ENCODE measurements at regions of chr7 and their contacts with region 1.

Region 1: DNA sequence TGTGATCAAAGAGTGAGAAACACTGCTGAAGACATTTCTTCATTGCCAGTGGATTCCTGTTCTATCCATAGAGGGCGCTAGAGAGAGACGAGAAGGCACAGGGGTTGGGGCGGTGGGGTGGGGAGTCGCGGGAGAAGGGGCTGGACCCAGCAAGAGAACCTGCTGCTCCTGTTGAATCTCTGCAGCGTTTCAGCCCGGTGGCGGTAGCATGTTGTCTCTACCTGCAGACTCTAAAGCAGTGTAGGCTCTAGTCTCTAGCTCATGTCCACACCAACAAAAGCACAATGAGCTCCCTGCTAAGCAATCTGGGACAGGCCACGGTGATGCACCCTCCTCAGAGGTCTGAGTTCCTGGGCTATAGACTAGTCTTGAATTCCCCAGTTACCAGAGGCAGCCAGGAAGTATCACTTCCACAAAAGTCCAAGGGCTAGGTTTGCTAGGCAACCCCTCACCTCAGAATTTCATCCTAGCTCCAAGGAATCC is 167.7 kb downstream of the DGKB start:
- ATAC-seq: peak in 3 of 8 experiments; percentile 22 to 43 (median 41)
- H3K4me3 ChIP-seq: no peak overlapping the region
- H3K27ac ChIP-seq: no peak overlapping the region
- H3K4me1 ChIP-seq: no peaks in the 10 kb centered on the region

Region 2: DNA sequence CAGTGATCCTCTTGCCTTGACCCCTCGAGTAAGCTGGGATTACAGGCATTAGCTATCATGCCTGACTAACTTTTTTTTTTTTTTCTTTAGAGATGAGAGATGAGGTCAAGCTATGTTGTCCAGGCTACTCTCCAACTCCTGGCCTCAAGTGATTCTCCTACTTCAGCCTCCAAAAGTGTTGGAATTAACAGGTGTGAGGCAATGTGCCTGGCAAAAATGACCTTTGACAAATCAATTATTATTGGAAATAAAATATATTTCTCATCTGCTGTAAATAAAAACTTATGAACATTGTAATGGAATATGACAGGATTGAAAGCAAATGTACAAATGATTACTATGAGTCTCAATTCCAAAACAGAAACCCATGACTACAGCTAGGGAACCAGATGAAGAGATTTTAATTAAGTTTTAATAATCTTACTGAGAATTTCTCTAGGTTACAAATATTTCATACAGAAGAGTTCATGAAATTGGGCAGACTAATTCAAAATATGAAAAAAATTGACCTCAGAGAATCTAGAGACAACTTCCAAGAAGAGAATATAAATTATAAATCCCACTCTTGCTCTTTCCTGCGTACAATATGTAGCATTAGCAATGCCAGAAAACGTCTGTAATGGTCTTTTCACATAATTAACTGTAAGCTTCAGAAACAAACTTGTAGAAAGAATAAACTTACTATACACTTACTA is 247.0 kb before region 1 on chr7:
- in situ Hi-C with region 1: no loop called
- ATAC-seq: no peak
- H3K4me3 ChIP-seq: no peak overlapping the region
- H3K27ac ChIP-seq: no peak overlapping the region
- H3K4me1 ChIP-seq: no peaks in the 10 kb centered on the region

Region 3: DNA sequence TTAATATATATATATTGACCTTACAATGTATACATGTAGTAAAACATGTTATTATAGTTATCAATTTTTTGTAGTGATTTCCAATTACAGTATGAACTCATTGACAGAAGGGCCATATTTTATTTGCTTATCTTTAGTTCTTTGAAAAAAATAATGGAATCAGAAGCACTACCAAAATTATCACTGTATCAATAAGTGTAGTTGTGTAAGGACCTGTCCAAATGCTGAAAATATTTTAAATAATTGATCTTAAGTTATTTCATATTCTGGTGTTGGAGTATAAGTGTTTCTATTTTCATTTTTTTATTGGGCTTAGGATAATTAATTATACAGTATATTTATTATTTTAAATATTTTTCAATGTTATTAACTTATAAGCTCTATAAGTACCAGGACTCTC is 176.2 kb after region 1 on chr7:
- in situ Hi-C with region 1: loop called in 1 of 9 experiments (anchors 10 kb)
- ATAC-seq: no peak
- H3K4me3 ChIP-seq: no peak overlapping the region
- H3K27ac ChIP-seq: no peak overlapping the region
- H3K4me1 ChIP-seq: peaks cover 0 to 5% of the 10 kb centered on the region in 2 donors

Region 4: DNA sequence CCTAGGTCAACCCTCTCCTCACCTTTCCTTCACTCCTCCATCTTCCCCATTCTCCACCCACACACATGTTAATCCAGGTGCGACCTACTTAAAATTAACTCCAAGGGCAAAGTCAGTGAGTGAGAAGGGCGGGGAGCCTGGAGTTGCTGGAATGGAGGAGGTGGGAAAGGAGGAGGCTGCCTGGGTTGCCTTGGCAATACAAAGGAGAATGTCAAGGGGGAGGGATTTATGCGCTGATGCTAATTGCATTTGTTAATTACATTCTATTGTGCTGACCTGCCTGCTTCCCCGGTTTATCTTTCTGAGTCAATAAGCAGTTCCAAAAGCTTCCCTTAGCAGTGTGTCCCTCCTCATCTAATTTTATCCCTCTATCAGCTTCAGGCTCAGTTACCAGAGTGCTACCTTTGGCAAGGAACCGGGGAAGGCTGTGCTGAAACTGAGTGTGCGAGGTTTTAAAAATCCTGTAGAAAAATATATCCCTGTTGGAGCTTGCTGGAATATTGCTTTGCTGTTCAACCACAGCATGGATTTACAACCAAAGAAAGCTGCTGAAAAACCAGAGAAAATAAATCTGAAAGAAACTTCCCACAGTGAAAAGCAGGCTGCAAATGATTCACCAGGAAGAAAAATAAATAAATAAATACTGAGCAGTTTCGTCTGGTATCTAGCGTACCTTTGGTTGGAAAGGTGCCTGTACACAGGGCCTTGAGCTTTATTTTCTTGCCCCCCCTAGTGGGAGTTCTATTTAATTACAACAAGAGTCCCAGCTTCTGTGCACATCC is 280.9 kb after region 1 on chr7:
- in situ Hi-C with region 1: loop called in 1 of 9 experiments (anchors 25 kb)
- ATAC-seq: peak; percentile 62 to 95 (median 92)
- H3K4me3 ChIP-seq: peak overlapping the region; percentile 2 to 22 (median 14)
- H3K27ac ChIP-seq: no peak overlapping the region
- H3K4me1 ChIP-seq: peaks cover 5 to 6% of the 10 kb centered on the region in 2 donors

Measured in motor neuron (in vitro differentiated cells).